SK-N-SH (cell line): ENCODE measurements at regions of chr2 and their contacts with region 1.

Region 1: GRCh38 chr2:235746257-235747084 is 252.6 kb downstream of the AGAP1 start:
- DNase-seq: peak; percentile 89
- H3K4me3 ChIP-seq: no peak overlapping the region; a peak in 1 of 4 replicates
- H3K27ac ChIP-seq: no peak overlapping the region
- H3K4me1 ChIP-seq: peaks cover 0 to 5% of the 10 kb centered on the region in 2 experiments; a peak in 1 of 4 replicates
- H3K27me3 ChIP-seq: no peaks in the 10 kb centered on the region
- CTCF ChIP-seq: peak; percentile 84
- EP300 ChIP-seq: no peak
- RAD21 ChIP-seq: peak; percentile 94

Region 2: DNA sequence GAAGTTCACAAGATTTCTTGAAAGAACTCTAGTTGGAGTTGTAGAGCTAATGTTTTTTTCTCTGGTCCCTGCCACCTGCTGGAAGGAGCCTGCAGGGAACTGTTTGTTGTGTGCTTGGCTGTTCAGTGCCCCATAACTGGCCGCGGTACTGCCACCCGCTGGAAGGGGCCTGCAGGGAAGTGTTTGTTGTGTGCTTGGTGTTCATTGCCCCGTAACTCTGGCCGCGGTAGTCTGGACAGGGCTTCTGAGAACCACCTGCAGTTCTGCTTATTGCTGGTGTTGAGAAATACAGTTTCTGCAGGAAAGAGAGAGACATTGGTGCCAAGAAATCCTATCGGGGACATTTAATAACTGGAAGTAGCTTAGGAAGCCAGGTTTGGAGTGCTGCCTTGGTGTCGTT is 194.5 kb before region 1 on chr2:
- CTCF ChIA-PET with region 1: interaction called, 11 read pairs
- POLR2A ChIA-PET with region 1: no interaction called
- DNase-seq: peak; percentile 76
- H3K4me3 ChIP-seq: no peak overlapping the region; a peak in 1 of 4 replicates
- H3K27ac ChIP-seq: no peak overlapping the region
- H3K4me1 ChIP-seq: peaks cover 0 to 18% of the 10 kb centered on the region in 2 experiments; a peak in 1 of 4 replicates
- H3K27me3 ChIP-seq: no peaks in the 10 kb centered on the region
- CTCF ChIP-seq: peak; percentile 59
- EP300 ChIP-seq: no peak
- RAD21 ChIP-seq: peak; percentile 67

Region 3: DNA sequence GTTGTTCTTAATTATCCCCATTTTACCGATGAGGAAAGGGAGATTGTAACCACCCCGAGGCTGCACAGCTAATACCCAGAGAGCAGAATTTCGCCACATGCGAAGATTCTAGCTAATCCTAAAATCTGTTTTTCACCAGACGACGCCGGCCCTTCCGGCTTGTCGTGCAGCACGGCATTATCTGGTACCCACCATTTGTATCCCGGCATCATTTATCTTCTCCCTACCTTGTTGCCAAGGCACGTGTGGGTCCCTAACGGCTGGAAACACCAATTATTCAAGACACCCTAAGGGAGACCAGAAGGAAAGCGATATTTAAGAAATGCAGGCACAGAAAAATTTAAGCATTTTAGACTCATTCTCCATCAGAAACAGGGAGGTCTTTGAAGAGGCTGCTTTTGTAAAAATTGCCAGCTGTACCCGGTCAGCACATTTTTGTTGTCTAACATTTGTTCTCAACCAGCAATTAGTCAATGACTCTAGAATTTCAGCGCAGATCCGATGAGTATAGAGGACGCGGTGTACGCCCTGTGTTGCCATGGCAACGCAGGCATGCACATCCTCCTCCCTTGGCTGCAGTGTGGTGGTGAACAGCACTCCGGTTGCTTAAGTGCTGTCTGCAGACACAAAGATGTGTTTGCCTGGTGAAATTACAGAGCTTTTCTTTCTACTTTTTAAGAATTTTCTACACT is 141.0 kb before region 1 on chr2:
- CTCF ChIA-PET with region 1: interaction called, 301 read pairs
- POLR2A ChIA-PET with region 1: interaction called, 4 read pairs
- DNase-seq: peak; percentile 89
- H3K4me3 ChIP-seq: peak overlapping the region in 1 of 2 experiments; percentile 32; a peak in 2 of 4 replicates
- H3K27ac ChIP-seq: peak overlapping the region; percentile 49 to 89; a peak in 3 of 4 replicates
- H3K4me1 ChIP-seq: peaks cover 0 to 21% of the 10 kb centered on the region in 2 experiments; a peak in 2 of 4 replicates
- H3K27me3 ChIP-seq: no peaks in the 10 kb centered on the region
- CTCF ChIP-seq: no peak
- EP300 ChIP-seq: peak in 1 of 2 experiments; percentile 39; a peak in 1 of 4 replicates
- RAD21 ChIP-seq: no peak; the same call in 1 of the 2 replicates

Region 4: DNA sequence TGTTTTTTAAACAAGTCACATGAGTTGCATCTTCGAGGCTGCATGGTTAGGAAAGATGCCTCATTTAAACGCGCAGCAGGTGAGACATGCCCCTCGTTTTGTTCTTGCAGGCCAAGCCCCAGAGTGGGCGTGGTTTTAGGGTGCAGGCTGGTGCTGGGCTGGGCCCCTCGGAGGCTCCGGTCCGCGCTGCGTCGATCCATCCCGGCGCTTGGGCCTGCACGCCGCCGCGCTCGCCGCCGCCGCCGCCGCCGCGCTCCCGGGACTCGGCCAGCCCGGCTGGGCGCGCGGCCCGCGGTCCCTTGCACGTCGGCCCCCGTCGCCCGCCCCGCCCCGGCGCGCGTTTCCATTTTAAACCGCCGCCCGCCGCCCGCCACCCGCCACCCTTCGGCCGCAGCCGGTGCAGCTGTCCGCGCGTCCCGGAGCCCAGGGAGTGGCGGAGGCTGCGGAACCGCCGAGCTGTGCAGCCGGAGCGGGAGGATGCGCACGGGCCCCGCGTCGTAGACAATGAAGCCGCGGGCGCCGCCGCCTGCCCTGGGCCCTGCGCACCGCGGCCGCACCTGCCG is 77.1 kb before region 1 on chr2:
- CTCF ChIA-PET with region 1: interaction called, 66 read pairs
- POLR2A ChIA-PET with region 1: no interaction called
- DNase-seq: peak; percentile 90
- H3K4me3 ChIP-seq: peak overlapping the region in 1 of 2 experiments; percentile 61; a peak in 3 of 4 replicates
- H3K27ac ChIP-seq: peak overlapping the region in 1 of 2 experiments; percentile 47; a peak in 1 of 4 replicates
- H3K4me1 ChIP-seq: peaks cover 6 to 36% of the 10 kb centered on the region in 2 experiments; a peak in 3 of 4 replicates
- H3K27me3 ChIP-seq: no peaks in the 10 kb centered on the region
- CTCF ChIP-seq: no peak
- EP300 ChIP-seq: no peak
- RAD21 ChIP-seq: no peak

Region 5: GRCh38 chr2:235725016-235725489 is 21.4 kb before region 1 on chr2:
- CTCF ChIA-PET with region 1: interaction called, 22 read pairs
- POLR2A ChIA-PET with region 1: no interaction called
- DNase-seq: no peak
- H3K4me3 ChIP-seq: no peak overlapping the region
- H3K27ac ChIP-seq: no peak overlapping the region
- H3K4me1 ChIP-seq: peaks cover 0 to 47% of the 10 kb centered on the region in 2 experiments; a peak in 2 of 4 replicates
- H3K27me3 ChIP-seq: no peaks in the 10 kb centered on the region
- CTCF ChIP-seq: no peak
- EP300 ChIP-seq: no peak
- RAD21 ChIP-seq: no peak